Ovary (tissue), 10 donors: ENCODE measurements at regions of chr11 and their contacts with region 1.

Region 1: DNA sequence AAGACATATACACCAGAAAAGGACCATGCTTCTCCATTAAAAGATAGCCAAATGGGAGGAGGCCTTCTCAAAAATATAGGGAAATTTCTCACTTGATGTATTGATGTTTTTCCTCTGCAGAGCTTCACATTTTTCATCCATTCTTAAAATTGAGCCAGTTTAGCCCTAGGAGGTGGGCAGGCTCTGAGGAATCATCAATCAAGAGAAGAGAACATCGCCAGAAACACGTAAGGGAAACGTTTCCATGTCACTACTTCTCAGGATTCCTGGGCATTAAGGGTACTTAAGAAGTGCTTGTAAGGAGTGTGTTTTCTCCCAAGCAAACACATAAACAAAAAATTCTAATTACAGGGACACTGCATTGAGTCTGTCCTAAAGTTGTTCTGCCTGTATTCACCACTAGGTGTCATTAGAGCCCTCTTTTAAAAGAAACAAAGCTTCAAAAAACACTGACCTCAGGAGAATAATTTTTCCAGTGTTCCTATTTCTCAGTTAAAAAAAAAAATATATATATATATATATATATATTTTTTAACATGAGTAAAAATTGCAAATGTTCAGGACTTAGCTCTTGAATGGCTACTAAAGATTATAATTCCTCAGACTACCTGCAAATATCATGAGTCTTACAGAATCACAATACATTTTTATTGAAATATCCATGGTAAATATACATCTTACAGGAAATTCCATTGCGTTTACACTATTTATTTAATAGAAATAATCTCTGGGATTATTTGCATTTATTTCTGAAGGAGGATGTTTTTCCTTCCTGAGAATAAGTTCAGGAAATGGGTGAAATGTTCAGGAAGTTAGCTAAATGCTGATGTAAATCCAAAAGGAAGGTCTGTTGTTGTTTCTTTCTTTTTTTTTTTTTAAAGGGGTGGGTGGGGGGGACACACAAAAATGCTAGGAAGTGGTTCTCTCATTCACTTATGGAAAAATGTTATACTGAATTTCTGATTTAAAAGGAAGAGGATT is 16.0 kb downstream of the FZD4 start:
- DNase-seq: no peak
- H3K4me3 ChIP-seq: no peak overlapping the region
- H3K27ac ChIP-seq: peak overlapping the region; percentile 17 to 68
- H3K4me1 ChIP-seq: peaks cover 29% of the 10 kb centered on the region
- H3K27me3 ChIP-seq: no peaks in the 10 kb centered on the region
- CTCF ChIP-seq: peak in 2 of 3 donors; percentile 66 to 78
- EP300 ChIP-seq: no peak
- POLR2A ChIP-seq: no peak

Region 2: GRCh38 chr11:86671682-86672621 is 267.2 kb before region 1 on chr11 and contains the start of gene ME3:
- intact Hi-C with region 1: loop called in 1 of 4 experiments (anchors 10 kb)
- DNase-seq: peak; percentile 70 to 91 (median 78)
- H3K4me3 ChIP-seq: peak within 1 kb of the TSS; percentile 93
- H3K27ac ChIP-seq: peak within 1 kb of the TSS; percentile 93 to 97
- H3K4me1 ChIP-seq: peaks cover 4% of the 10 kb centered on the region
- H3K27me3 ChIP-seq: no peaks in the 10 kb centered on the region
- CTCF ChIP-seq: no peak
- EP300 ChIP-seq: no peak
- POLR2A ChIP-seq: peak; percentile 47
- total RNA-seq, gene ME3: 35.9 to 48.6 (median 45.7) TPM

Region 3: GRCh38 chr11:87097582-87097981 is 158.4 kb after region 1 on chr11:
- intact Hi-C with region 1: no loop called
- DNase-seq: peak in 1 of 5 donors; percentile 39
- H3K4me3 ChIP-seq: no peak overlapping the region
- H3K27ac ChIP-seq: no peak overlapping the region
- H3K4me1 ChIP-seq: no peaks in the 10 kb centered on the region
- H3K27me3 ChIP-seq: no peaks in the 10 kb centered on the region
- CTCF ChIP-seq: peak in 1 of 3 donors; percentile 33
- EP300 ChIP-seq: no peak
- POLR2A ChIP-seq: no peak

Region 4: GRCh38 chr11:87281496-87281895 is 342.3 kb after region 1 on chr11:
- intact Hi-C with region 1: loop called (anchors 5 kb)
- DNase-seq: no peak
- H3K4me3 ChIP-seq: no peak overlapping the region
- H3K27ac ChIP-seq: no peak overlapping the region
- H3K4me1 ChIP-seq: no peaks in the 10 kb centered on the region
- H3K27me3 ChIP-seq: no peaks in the 10 kb centered on the region
- CTCF ChIP-seq: peak in 2 of 3 donors; percentile 22 to 43
- EP300 ChIP-seq: no peak
- POLR2A ChIP-seq: no peak

Region 5: DNA sequence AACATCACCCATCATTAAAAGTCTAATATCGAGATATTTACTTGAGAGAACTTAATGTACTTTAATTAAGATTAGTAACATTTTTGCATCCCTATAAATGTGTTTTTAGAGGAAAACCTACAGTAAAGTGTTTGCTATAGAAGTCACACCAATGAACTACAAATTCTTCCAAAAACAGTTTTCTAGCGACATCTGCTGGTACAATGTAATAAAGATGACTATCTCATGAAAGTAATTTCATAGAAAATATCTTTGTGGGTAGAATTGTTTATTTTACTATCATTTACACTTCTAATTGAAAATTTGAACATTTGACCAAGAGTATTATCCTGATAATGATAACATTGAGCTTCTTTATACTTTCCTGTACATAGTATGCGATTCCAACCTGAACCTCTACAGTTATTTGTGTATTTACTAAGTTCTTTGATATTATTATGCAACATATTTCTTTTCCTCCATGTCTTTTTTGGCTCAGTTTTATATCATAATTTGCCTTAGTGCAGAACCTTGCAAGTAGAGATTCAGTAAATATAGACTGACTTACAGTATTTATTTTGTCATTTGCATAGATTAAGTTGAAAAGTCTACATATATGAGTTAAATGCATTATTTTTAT is 351.2 kb after region 1 on chr11:
- intact Hi-C with region 1: loop called in 2 of 4 experiments (anchors 5 kb)
- DNase-seq: no peak
- H3K4me3 ChIP-seq: no peak overlapping the region
- H3K27ac ChIP-seq: no peak overlapping the region
- H3K4me1 ChIP-seq: no peaks in the 10 kb centered on the region
- H3K27me3 ChIP-seq: no peaks in the 10 kb centered on the region
- CTCF ChIP-seq: peak; percentile 41 to 67 (median 44)
- EP300 ChIP-seq: no peak
- POLR2A ChIP-seq: no peak